Lower lobe of right lung (tissue), 2 donors: ENCODE measurements at regions of chr7 and their contacts with region 1.

Region 1: DNA sequence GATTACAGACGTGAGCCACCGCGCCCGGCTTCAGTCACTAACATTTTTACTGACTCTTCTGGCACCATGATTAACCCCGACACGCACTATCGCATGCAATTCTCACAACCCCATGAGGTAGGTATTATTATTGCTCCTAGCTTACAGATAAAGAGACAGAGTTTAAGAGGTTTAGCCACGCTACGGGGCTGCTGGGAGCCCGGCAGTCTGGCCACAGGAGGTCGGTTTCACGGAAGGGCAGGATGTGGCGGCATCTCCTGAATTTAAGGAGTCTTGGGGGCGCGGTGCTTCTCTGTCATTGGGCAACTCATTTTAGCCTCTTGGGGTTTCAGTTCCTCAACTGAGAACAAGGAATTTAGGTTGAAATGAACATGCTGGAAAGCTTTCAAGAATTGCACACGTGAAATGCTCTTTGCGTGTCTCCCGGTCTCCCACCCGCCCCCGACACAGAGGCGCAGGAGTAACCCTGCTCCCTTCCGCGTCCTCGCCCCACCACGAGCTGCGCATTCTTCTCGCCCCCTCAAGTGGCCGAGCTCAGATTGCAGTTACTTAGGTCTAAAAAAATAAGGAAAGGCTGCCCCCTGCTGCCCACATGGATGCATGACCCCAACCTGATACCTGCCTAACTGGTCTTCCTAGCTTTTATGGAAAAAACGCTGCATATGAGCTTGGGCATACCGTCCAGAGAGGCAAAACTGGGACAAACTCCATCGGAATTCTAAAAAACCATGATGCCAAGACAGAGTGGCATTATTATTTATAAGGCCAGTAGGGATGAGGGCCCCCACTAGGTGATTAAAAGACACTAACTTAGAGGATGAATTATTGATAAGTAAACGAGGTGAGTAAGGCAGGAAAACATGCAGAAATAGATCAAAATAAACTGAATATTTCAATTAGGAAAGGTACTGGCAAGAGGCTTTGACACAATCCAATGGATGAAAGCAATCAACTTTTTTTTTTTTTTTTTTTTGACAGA is 12.4 kb downstream of the PRSS2 start:
- DNase-seq: peak; percentile 87
- ATAC-seq: peak; percentile 89 to 92
- H3K4me3 ChIP-seq: peak overlapping the region; percentile 34
- H3K27ac ChIP-seq: no peak overlapping the region
- H3K4me1 ChIP-seq: peaks cover 5% of the 10 kb centered on the region
- H3K27me3 ChIP-seq: peaks cover 6% of the 10 kb centered on the region
- CTCF ChIP-seq: peak; percentile 90

Region 2: DNA sequence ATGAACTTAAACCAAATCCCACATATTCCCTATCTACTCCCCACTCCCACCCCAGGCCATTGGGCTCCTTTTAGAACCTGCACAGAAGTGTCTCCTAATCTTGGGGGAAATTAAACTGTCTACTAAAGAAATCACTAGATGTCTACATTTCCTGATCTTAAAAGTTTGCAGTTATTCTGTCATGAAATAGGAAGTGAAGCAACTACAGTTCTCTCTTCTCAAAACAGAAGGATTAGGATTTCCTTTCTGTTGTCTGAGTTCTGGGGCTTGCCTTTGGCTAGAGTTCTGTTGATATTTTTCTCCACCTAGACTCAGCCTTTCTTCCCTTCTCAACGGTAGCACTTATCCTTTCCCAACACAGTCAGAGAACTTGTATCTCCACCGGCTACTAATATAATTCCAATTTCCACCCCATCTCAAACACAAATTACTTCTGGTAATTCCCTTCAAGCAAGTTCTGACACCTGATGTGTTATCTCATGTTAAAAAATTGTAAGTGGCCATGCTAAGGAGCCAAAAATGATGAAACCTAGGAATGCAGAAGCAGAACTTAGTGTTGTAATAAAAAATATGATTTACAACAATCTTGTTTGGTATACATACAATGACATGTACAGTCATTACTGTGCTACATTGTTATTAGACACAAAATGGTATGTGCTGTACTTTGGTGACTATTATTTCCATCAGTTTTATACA is 854.9 kb before region 1 on chr7:
- intact Hi-C with region 1: no loop called
- DNase-seq: no peak
- ATAC-seq: peak in 1 of 2 donors; percentile 29
- H3K4me3 ChIP-seq: no peak overlapping the region
- H3K27ac ChIP-seq: no peak overlapping the region
- H3K4me1 ChIP-seq: no peaks in the 10 kb centered on the region
- H3K27me3 ChIP-seq: no peaks in the 10 kb centered on the region
- CTCF ChIP-seq: no peak

Region 3: DNA sequence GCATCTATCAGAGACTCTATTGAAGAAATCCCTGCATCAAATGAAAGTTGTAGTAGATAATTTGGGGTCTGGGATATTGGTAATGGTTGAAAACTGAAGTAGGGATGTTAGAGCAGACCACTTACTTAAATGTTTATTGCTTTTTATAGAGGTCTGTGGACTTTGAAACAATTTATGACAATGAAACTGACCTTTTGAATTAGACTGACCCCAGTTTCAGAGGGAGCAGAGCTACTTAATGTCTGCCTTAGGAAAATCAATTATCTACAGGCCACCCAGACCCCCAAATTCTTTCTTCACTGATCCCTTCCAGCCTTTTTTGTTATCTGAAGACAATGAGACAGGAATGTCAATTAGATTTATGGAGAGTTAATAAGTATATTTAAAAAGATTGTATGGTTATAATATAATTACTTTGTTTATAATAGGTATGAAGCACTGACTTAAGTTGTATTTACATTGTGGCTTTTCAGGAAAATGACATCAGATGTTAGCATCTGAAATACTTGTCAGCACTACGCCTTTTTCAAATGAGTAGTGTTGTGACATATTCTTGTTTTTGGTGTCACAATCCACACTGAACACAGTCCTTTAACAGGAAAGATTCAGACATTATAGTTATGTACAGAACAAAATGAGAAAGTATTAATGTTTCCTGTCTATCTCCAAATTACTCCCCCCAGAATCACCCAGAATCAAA is 657.8 kb before region 1 on chr7:
- intact Hi-C with region 1: no loop called
- DNase-seq: no peak
- ATAC-seq: no peak
- H3K4me3 ChIP-seq: no peak overlapping the region
- H3K27ac ChIP-seq: no peak overlapping the region
- H3K4me1 ChIP-seq: no peaks in the 10 kb centered on the region
- H3K27me3 ChIP-seq: no peaks in the 10 kb centered on the region
- CTCF ChIP-seq: no peak

Region 4: DNA sequence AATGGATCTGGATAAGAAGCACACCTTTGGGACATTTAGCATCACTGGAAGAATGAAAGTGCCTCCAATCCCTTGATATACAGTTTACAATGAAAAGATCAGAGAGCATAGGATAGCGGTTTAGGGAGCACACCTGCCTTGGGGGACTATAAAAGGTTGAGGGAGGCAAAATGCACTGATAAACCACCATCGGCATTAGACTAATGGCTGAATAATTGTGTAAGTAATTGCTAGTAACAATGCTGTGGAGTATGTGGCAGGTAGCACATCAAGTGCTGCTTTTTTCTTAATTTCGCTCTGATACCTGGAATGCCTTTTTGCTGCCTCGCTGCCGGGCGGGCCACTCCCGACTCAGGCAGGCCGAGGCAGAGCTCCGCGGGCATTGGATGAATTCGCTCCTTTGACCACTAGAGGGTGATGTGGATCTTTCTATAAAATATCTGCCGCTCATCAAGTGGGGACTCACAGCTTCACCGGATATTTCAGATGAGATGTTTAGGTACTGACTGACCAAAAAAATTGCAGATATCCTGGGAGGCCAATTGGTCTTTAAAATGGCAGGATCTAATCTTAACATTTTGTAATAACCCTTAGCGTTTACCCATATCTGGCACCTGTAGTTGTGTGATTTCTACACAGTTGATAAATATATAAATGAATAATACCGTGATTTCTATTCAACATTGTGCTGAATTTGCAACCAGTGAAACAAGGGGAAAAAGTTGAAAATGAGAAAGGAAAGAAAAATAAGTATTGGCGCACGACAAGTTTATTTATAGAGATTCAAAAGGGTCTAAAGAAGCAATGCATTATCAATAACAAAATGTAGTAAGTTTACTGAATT is 150.7 kb before region 1 on chr7:
- intact Hi-C with region 1: loop called (anchors 10 kb)
- DNase-seq: peak; percentile 51
- ATAC-seq: peak; percentile 87 to 88
- H3K4me3 ChIP-seq: no peak overlapping the region
- H3K27ac ChIP-seq: no peak overlapping the region
- H3K4me1 ChIP-seq: no peaks in the 10 kb centered on the region
- H3K27me3 ChIP-seq: peaks cover 14% of the 10 kb centered on the region
- CTCF ChIP-seq: peak; percentile 78

Region 5: DNA sequence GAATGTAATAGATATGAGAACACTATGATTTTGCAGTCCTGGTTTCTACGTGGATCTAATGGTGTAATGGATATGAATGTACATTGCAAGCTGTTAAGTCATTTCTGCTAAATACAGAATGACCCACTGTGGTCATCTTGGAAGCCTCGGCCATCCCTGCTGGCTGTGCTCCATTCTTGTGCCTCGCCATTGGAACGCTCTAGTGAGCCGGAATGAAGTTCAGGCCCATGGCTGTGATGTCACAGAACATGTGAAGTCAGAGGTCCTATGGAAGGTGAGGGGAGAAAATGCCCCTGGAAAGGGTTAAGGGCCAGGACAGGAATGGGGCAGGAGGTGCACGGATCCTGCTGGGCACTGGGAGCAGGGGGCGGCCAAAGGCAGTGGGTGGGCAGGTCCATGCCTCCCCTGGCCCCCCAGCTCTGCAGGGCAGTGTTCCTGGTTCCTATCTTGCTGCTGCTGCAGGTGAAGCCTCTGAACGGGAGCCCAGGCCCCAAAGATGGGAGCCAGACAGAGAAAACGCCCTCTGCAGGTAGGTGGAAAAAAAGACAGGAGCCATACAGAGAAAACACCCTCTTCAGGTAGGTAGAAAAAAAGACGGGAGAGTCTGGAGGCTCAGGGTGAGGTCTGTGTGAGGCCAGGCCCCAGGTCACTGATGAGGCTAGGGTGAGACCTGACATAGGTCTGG is 156.2 kb after region 1 on chr7 and contains the start of gene LLCFC1:
- intact Hi-C with region 1: no loop called
- DNase-seq: no peak
- ATAC-seq: peak; percentile 10 to 13
- H3K4me3 ChIP-seq: no peak within 1 kb of the TSS
- H3K27ac ChIP-seq: no peak within 1 kb of the TSS
- H3K4me1 ChIP-seq: no peaks in the 10 kb centered on the region
- H3K27me3 ChIP-seq: no peaks in the 10 kb centered on the region
- CTCF ChIP-seq: no peak
- total RNA-seq, gene LLCFC1: not detected

Region 6: DNA sequence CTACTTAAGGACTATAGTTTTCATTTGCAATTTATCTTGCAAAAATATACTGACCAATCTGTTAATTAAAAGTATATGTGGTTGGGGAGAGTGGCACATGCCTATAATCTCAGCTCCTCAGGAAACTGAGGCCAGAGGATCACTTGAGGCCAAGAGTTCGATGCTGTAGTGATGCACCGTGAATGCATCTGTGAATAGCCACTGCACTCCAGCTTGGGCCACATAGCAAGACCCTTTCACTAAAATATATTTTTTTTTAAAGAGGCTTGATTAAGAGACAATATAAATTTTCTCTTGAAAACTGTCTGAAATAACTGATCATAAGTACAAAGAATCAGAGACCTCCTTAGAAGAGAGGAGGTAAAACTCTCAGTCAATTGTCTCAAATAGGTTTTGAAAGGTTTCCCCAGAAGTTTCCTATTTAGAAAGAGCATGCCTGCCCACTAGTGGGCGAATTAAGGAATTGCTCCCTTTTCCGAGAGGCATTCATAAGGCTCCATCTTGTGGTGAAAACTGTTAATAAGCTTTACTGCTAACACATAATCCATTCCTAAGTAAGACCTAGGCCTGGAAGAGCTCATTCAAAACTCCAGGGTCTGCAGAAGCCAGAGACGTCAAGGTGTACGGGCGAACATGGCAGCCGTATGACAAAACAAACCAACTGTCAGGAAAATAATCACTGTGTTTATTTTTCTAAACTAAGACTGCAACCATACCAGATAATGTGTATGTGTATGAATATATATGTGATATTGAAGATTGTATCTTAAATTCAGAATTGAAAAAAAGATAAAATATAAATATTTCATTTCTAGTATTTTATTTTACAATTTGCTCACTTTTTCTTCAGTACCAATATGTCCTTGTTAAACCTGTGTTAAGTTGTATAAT is 431.8 kb after region 1 on chr7:
- intact Hi-C with region 1: no loop called
- DNase-seq: no peak
- ATAC-seq: peak; percentile 85 to 92
- H3K4me3 ChIP-seq: no peak overlapping the region
- H3K27ac ChIP-seq: no peak overlapping the region
- H3K4me1 ChIP-seq: no peaks in the 10 kb centered on the region
- H3K27me3 ChIP-seq: peaks cover 4% of the 10 kb centered on the region
- CTCF ChIP-seq: peak; percentile 99